ENCODE measurements at regions of chr11 and their contacts with region 1.

Region 1: DNA sequence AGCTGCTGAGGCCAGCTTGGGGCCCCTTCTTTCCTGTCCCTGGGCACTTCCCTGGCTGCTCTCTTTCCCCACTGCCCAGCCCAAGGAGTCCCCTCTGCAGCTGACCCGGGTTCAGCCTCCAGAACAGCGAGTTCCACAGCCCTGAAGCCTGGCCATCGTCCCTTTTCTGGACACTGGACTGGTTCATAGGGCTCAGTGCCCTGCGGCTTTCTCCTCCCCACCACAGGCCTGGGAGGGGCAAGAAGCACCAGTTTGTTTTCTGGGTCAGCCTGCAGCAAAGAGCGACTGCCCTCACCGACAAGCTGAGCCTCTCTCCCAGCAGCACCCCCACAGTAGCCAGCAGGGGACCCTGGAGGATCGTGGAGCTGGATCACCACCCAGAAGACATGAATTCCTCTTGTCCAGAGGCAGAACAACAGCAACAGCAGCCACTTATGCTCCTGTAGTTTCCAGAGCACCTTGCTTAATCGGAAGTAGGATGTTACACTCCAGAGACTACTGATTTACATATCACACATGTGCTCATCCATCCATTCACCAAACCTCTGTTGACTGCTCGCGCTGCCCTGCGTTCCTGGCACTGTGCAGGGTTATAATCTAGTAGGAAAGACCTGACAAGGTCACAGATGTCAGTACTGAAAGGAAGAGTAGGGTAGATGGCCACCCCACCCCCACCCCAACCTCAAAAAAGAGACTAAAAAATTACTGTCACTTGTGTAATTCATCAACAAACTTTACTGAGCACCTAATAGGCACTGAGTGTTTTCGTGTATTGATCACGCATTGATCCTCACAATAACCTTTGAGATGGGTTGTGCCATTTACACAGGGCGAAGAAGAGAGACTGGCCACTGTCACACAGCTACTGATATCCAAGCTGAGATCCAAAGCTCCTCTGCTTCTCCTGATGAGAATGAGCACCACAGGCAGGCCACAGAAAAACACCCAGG is 13.0 kb upstream of the CXCR5 start:
- DNase-seq: peak; percentile 73
- H3K4me3 Mint-ChIP-seq: peak overlapping the region; percentile 83
- H3K27ac Mint-ChIP-seq: peak overlapping the region; percentile 99
- H3K4me1 Mint-ChIP-seq: peaks cover 56% of the 10 kb centered on the region
- H3K27me3 Mint-ChIP-seq: no peaks in the 10 kb centered on the region

Region 2: DNA sequence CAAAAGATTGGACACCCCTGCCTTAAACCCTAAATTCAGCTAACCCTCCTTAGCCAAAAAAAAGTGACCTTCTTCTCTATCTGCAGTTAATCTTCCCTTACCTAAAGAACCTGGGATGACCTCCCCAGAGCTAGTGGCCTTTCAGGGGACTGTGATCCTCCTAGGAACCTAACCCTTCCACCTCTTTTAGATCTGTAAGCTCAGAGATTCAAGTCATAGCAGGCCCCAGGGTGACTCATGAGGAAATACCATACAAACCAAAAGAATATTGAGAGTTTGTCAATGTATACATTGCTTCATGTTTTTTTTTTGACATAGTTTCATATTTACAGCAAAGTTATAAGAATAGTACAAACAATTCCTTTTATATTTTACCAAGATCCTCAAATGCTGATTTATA is 25.3 kb before region 1 on chr11:
- CTCF ChIA-PET with region 1: interaction called, 4 read pairs
- POLR2A ChIA-PET with region 1: interaction called, 3 read pairs
- intact Hi-C with region 1: loop called (anchors 1 kb)
- DNase-seq: peak; percentile 55
- H3K4me3 Mint-ChIP-seq: no peak overlapping the region
- H3K27ac Mint-ChIP-seq: peak overlapping the region; percentile 24
- H3K4me1 Mint-ChIP-seq: peaks cover 45% of the 10 kb centered on the region
- H3K27me3 Mint-ChIP-seq: no peaks in the 10 kb centered on the region

Region 3: GRCh38 chr11:118895142-118896039 is 24.7 kb after region 1 on chr11:
- CTCF ChIA-PET with region 1: interaction called, 4 read pairs
- POLR2A ChIA-PET with region 1: interaction called, 12 read pairs
- intact Hi-C with region 1: no loop called
- DNase-seq: peak; percentile 89
- H3K4me3 Mint-ChIP-seq: peak overlapping the region; percentile 58
- H3K27ac Mint-ChIP-seq: peak overlapping the region; percentile 93
- H3K4me1 Mint-ChIP-seq: peaks cover 71% of the 10 kb centered on the region
- H3K27me3 Mint-ChIP-seq: no peaks in the 10 kb centered on the region